Heart left ventricle (tissue), 16 donors: ENCODE measurements at regions of chr14 and their contacts with region 1.

Region 1: DNA sequence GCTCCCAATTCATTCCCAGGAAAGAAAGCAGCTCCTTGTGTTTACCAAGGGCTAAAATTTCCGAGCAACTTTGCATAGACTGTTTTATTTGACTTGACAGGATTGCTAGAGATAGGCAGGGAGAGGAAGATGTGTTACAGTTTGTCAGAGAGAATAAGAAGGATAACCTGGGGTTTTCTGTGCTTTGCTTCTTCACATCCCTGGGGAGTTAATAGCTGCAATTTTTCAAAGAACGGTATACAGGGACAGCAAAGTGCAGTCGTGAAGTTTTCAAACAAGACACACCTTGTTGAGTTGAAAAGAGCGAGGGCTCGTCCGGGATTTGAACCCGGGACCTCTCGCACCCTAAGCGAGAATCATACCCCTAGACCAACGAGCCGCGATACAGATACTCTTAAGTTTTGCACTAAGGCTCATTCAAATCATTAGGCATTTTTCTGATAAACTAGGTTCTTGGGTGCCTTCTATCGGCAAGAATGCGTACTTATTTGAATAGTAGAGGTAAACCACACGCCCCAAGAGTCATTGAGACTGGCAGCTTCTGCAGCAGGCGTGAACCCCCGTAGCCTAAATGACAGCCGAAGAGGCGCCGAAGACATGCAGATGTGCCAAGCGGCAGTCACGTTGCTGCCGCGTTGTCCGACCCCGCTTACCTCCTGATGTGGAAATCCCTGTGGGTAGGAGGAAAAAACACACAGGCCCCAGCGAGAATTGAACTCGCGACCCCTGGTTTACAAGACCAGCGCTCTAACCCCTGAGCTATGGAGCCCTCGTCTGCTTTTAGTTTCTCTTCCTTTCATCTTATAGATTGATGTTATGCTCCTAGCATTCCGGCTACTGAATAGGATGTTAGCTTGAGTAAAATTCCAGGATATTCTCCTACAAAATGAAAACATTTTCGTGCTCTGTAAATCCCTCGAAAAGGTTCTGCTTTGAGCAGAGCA is 22.2 kb upstream of the RNASE12 start:
- DNase-seq: peak; percentile 67 to 84 (median 81)
- ATAC-seq: peak; percentile 79 to 89 (median 85)
- H3K4me3 ChIP-seq: peak overlapping the region; percentile 15 to 74 (median 58)
- H3K27ac ChIP-seq: peak overlapping the region in 10 of 12 donors; percentile 21 to 82 (median 59)
- H3K4me1 ChIP-seq: peaks cover 0 to 60% (median 7%) of the 10 kb centered on the region in 12 donors
- H3K27me3 ChIP-seq: peaks cover 0 to 3% (median 0%) of the 10 kb centered on the region in 9 donors
- CTCF ChIP-seq: peak; percentile 38 to 86 (median 74)
- POLR2A ChIP-seq: no peak

Region 2: GRCh38 chr14:20332788-20333493 is 280.4 kb before region 1 on chr14 and contains the start of gene CCNB1IP1:
- intact Hi-C with region 1: loop called in 2 of 10 experiments (anchors 2 to 5 kb)
- DNase-seq: peak in 4 of 5 donors; percentile 57 to 78 (median 66)
- ATAC-seq: peak; percentile 98 to 99 (median 99)
- H3K4me3 ChIP-seq: peak within 1 kb of the TSS; percentile 17 to 75 (median 68)
- H3K27ac ChIP-seq: peak within 1 kb of the TSS; percentile 59 to 94 (median 88)
- H3K4me1 ChIP-seq: peaks cover 0 to 26% (median 15%) of the 10 kb centered on the region in 12 donors
- H3K27me3 ChIP-seq: no peaks in the 10 kb centered on the region
- CTCF ChIP-seq: no peak
- POLR2A ChIP-seq: no peak
- total RNA-seq, gene CCNB1IP1: 24.5 to 85.6 (median 53.0) TPM

Region 3: DNA sequence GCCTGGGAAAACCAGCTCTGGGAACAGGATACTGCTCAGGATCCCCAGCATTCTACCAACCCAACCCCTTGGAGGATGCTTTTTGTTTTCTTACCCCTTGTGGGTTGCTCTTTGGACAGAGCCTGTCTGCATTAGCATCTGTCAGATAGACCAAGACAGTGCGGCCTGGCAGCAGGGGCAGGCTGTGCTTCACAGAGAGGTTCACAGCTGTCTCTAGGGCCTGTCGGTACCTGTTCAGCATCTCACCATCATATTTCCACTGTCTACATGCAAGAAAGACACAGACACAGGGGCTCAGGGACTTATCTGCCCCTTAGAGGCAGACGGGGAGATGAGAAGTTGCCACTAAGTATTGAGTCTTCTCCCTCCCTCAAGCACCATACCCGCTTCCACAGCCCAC is 221.9 kb before region 1 on chr14:
- intact Hi-C with region 1: no loop called
- DNase-seq: no peak
- ATAC-seq: no peak
- H3K4me3 ChIP-seq: no peak overlapping the region
- H3K27ac ChIP-seq: no peak overlapping the region
- H3K4me1 ChIP-seq: no peaks in the 10 kb centered on the region
- H3K27me3 ChIP-seq: no peaks in the 10 kb centered on the region
- CTCF ChIP-seq: no peak
- POLR2A ChIP-seq: no peak

Region 4: GRCh38 chr14:20413045-20413799 is 200.1 kb before region 1 on chr14 and contains the start of gene TEP1:
- intact Hi-C with region 1: loop called (anchors 1 to 5 kb)
- DNase-seq: peak; percentile 90 to 94 (median 94)
- ATAC-seq: peak; percentile 92 to 98 (median 97)
- H3K4me3 ChIP-seq: peak within 1 kb of the TSS; percentile 58 to 98 (median 80)
- H3K27ac ChIP-seq: peak within 1 kb of the TSS; percentile 79 to 98 (median 94)
- H3K4me1 ChIP-seq: peaks cover 0 to 41% (median 9%) of the 10 kb centered on the region in 12 donors
- H3K27me3 ChIP-seq: no peaks in the 10 kb centered on the region
- CTCF ChIP-seq: peak in 1 of 12 donors; percentile 28
- POLR2A ChIP-seq: peak in 1 of 2 donors; percentile 83
- total RNA-seq, gene TEP1: 4.1 to 31.3 (median 9.8) TPM

Region 5: GRCh38 chr14:20469242-20469889 is 144.0 kb before region 1 on chr14 and contains the start of gene PNP:
- intact Hi-C with region 1: loop called in 3 of 10 experiments (anchors 1 to 5 kb)
- DNase-seq: peak; percentile 86 to 93 (median 92)
- ATAC-seq: peak; percentile 94 to 98 (median 96)
- H3K4me3 ChIP-seq: peak within 1 kb of the TSS; percentile 61 to 91 (median 80)
- H3K27ac ChIP-seq: peak within 1 kb of the TSS; percentile 78 to 97 (median 89)
- H3K4me1 ChIP-seq: peaks cover 0 to 41% (median 13%) of the 10 kb centered on the region in 12 donors
- H3K27me3 ChIP-seq: no peaks in the 10 kb centered on the region
- CTCF ChIP-seq: no peak
- POLR2A ChIP-seq: peak; percentile 66 to 98
- total RNA-seq, gene PNP: 4.2 to 38.5 (median 10.5) TPM

Region 6: GRCh38 chr14:20564501-20564997 is 48.8 kb before region 1 on chr14:
- intact Hi-C with region 1: no loop called
- DNase-seq: no peak
- ATAC-seq: no peak
- H3K4me3 ChIP-seq: no peak overlapping the region
- H3K27ac ChIP-seq: no peak overlapping the region
- H3K4me1 ChIP-seq: no peaks in the 10 kb centered on the region
- H3K27me3 ChIP-seq: no peaks in the 10 kb centered on the region
- CTCF ChIP-seq: no peak
- POLR2A ChIP-seq: no peak

Region 7: DNA sequence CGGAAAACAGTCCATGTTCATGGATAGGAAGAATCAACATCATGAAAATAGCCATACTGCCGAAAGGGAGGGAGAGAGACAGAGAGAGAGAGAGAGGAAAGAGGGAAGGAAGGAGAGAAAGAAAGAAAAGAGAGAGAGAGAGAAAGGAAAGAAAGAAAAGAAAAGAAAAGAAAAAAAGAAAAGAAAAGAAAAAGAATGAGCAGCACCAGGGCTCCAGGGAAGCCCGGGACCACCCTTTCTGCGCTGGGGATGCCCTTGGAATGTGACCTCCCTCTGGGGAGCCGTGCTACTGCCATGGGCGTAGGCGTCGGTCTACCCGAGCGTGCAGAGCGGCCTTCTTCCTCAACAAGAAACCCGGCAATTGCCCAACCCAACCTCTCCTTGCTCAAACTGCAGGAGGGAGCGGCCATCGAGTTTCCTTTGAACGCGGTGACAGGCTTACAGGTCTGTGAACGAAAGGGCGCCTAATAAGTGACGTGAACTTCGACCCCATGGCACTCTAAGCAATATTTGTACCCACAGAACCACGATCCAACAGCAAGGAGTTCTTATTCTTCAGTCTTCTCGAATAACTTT is 11.2 kb after region 1 on chr14:
- intact Hi-C with region 1: loop called in 1 of 10 experiments (anchors 1 kb)
- DNase-seq: peak; percentile 25 to 77 (median 52)
- ATAC-seq: peak; percentile 27 to 62 (median 53)
- H3K4me3 ChIP-seq: peak overlapping the region in 10 of 12 donors; percentile 9 to 47 (median 26)
- H3K27ac ChIP-seq: peak overlapping the region in 2 of 12 donors; percentile 1 to 12
- H3K4me1 ChIP-seq: peaks cover 0 to 41% (median 10%) of the 10 kb centered on the region in 12 donors
- H3K27me3 ChIP-seq: peaks cover 0 to 44% (median 0%) of the 10 kb centered on the region in 9 donors
- CTCF ChIP-seq: no peak
- POLR2A ChIP-seq: no peak

Region 8: DNA sequence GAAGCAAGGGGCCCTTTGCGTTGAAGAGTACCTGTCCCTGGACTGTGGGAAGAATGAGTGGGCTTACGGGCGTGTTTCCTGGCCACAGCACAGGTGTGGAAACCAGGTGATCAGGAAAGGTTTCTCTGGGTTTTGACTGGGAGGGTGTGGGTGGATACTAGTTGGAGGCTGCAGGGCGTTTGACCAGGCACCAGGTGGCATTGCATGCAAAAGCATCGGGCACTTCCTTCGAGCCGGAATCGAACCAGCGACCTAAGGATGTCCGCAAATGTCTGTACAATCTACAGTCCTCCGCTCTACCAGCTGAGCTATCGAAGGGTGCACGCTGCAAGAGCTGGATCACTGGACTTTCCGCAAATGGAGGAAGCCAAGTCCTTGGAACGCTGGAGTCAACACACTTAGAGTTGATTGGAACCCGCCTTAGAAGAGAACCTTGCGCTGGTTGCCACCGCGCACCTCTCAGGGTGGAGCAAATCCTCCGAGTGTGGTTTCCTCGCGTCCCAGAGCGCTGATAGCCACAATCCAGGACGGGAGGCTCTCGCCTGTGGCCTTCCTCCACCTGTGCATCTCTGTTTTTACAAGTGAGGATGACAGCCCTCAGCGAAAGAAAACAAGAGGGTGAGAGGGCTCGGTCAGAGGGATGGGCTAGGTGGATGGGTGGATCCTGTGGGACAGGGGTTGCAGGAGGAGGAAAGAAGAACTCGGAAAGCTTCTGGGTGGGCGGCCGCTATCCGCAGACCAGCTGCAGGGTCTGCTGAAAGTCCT is 49.8 kb after region 1 on chr14:
- intact Hi-C with region 1: no loop called
- DNase-seq: peak in 4 of 5 donors; percentile 38 to 77 (median 43)
- ATAC-seq: peak; percentile 23 to 76 (median 56)
- H3K4me3 ChIP-seq: peak overlapping the region in 9 of 12 donors; percentile 14 to 44 (median 36)
- H3K27ac ChIP-seq: no peak overlapping the region
- H3K4me1 ChIP-seq: peaks cover 0 to 17% (median 1%) of the 10 kb centered on the region in 12 donors
- H3K27me3 ChIP-seq: peaks cover 4 to 96% (median 38%) of the 10 kb centered on the region in 9 donors
- CTCF ChIP-seq: peak in 10 of 12 donors; percentile 15 to 46 (median 32)
- POLR2A ChIP-seq: no peak

Region 9: DNA sequence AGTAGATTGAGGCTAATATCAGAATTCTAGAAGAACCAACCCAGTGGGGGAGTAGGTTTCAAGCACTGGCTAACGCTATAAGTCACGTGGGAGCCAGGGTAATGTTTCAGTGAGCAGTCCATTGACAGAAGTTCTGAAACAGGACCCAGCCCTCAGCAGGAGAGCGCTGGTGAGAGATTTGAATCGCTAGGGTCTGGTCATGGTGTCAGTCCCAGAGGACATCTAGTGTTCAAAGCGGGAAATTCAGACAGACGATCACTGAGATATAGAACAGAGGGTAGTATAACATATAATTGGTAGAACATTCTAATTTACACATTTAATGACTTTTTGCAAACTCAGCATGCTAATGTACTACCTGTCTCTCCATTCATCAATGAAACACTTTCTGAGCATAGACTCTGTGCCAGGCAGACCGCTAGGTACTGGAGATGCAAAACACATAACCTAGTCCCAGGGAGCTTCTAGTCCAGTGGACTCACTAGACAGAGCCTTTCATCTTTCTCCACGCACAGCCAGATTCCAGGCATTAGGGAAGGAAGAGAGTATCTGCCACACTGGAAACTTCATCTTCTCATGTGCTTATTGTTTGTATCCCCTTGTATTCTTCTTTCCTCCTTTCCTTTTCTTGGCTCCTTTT is 242.4 kb after region 1 on chr14:
- intact Hi-C with region 1: loop called in 1 of 10 experiments (anchors 10 kb)
- DNase-seq: peak in 4 of 5 donors; percentile 54 to 65 (median 58)
- ATAC-seq: peak; percentile 84 to 96 (median 95)
- H3K4me3 ChIP-seq: no peak overlapping the region
- H3K27ac ChIP-seq: no peak overlapping the region
- H3K4me1 ChIP-seq: peaks cover 0 to 6% (median 0%) of the 10 kb centered on the region in 12 donors
- H3K27me3 ChIP-seq: peaks cover 0 to 9% (median 0%) of the 10 kb centered on the region in 9 donors
- CTCF ChIP-seq: peak; percentile 64 to 85 (median 74)
- POLR2A ChIP-seq: no peak

Region 10: DNA sequence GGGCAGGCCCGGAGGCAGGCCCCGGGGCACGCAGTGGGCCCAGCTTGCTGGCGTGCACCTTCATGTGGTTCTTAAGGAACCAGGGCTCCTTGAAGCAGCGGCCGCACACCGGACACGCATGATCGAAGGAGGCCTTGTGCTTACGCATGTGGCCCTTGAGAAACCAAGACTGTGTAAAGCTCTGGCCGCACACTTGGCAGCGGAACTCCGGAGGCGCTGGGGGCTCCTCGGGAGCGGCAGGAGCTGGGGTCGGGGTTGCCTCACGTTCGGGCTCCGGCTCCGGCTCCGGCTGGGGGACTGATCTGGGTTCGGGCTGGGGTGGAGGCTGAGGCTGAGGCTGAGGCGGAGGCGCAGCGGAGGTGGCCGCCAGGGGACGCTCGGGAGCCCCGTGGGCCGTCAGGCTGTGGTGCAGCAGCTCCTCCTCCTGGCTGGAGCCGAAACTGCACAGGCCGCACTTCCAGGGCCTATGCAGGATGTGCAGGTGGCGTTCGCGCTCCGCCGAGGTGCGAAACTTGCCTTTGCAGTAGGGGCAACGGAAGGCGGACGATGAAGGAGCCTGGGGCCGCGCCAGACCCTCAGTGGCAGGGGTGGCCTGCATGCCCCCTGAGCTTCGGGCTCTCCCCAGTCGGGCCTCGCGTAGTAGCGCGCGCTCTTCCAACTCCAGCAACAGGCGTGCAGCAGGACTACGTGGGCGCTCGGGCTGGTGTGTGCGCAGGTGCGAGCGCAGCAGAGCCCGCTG is 479.1 kb after region 1 on chr14:
- intact Hi-C with region 1: loop called in 2 of 10 experiments (anchors 10 kb)
- DNase-seq: peak; percentile 81 to 95 (median 86)
- ATAC-seq: peak; percentile 43 to 87 (median 76)
- H3K4me3 ChIP-seq: peak overlapping the region in 1 of 12 donors; percentile 3
- H3K27ac ChIP-seq: peak overlapping the region in 2 of 12 donors; percentile 21 to 24
- H3K4me1 ChIP-seq: peaks cover 0 to 34% (median 11%) of the 10 kb centered on the region in 12 donors
- H3K27me3 ChIP-seq: no peaks in the 10 kb centered on the region
- CTCF ChIP-seq: peak in 11 of 12 donors; percentile 99 to 100 (median 100)
- POLR2A ChIP-seq: peak in 1 of 2 donors; percentile 22